ENCODE measurements at regions of chr2 and their contacts with region 1.

Region 1: GRCh38 chr2:210195101-210195852 is 24.1 kb upstream of the KANSL1L start:
- DNase-seq: peak in 2 of 10 donors; percentile 13 to 65

Region 2: DNA sequence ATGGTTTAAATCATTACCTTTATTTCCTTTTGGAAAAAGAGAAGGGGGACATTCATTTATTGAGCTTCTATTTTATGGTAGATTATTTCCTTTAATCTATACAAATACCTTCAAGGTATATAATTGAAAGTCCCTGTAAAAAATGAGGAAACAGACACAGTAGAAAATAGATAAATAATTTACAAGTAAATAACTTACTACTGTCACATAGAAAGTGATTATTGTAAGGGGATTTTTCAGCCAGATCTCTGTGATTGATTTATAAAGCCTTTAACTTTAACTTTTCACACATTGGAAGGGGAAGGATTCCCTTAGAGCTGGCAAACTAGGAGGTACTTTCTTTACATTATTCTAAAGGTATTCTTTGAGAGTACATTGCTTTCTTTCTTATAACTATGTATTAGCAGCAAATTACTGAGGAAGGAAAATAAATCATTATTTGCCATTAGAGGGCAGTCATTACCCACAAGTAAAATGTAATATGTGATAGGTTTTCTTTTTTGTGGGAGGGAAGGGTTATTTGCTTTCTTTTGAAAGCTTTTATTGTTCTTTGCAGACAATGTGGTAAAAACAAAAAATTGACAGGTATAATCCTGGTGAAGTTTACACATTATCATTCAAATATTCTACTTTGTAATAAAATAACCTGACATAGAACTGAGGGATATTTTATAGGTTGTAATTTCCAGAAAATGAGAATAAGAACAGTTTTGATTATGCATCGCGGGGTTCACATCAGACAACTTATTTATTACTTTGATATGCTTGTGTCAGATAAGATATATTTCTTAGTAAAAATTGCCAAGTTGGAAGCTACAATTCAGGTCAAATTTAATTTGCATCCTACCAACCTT is 217.7 kb before region 1 on chr2:
- intact Hi-C with region 1: loop called (anchors 1 kb)
- DNase-seq: no peak

Region 3: DNA sequence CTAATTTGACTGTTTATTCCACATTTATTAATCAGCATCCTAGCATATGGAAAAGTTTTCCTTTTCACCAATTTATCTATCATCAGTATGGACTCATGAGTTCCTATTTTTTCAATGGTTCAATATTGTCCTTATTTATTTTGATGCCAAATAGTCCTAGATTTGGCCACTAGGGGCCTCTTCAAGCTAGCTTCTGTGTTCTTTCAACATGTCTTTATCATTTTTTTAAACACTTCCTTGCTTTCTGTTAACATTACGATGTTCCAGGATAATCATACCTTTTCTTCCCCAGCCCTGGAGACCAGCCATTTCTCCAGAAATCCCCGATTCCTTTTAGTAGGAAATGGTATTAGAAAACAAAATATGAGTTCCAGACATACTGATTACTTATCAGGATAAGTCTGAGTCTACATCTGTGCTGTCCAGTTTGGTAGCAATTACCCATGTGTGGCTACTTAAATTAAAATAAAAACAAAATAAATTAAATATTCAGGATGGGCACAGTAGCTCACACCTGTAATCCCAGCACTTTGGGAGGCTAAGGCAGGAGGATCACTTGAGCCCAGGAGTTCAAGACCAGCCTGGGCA is 122.3 kb before region 1 on chr2:
- intact Hi-C with region 1: loop called (anchors 1 kb)
- DNase-seq: no peak

Region 4: GRCh38 chr2:210541290-210541902 is 346.1 kb after region 1 on chr2:
- intact Hi-C with region 1: no loop called
- DNase-seq: peak in 4 of 10 donors; percentile 3 to 47 (median 32)

Measured in posterior cingulate gyrus (tissue), 11 donors.